ENCODE measurements at regions of chr12 and their contacts with region 1.

Region 1: GRCh38 chr12:124512667-124513296 is 54.6 kb downstream of the NCOR2 start:
- DNase-seq: peak; percentile 88 to 90
- ATAC-seq: peak in 7 of 8 donors; percentile 6 to 54 (median 18)
- H3K4me3 ChIP-seq: peak overlapping the region in 2 of 10 donors; percentile 6 to 9
- H3K27ac ChIP-seq: peak overlapping the region; percentile 36 to 83 (median 74)
- H3K4me1 ChIP-seq: peaks cover 52 to 100% (median 92%) of the 10 kb centered on the region in 9 donors
- H3K27me3 ChIP-seq: no peaks in the 10 kb centered on the region
- CTCF ChIP-seq: no peak

Region 2: GRCh38 chr12:124433147-124433874 is 79.5 kb before region 1 on chr12:
- intact Hi-C with region 1: loop called in 1 of 10 experiments (anchors 5 kb)
- DNase-seq: peak; percentile 80 to 82
- ATAC-seq: peak; percentile 64 to 88 (median 74)
- H3K4me3 ChIP-seq: no peak overlapping the region
- H3K27ac ChIP-seq: peak overlapping the region; percentile 36 to 81 (median 54)
- H3K4me1 ChIP-seq: peaks cover 18 to 67% (median 43%) of the 10 kb centered on the region in 9 donors
- H3K27me3 ChIP-seq: no peaks in the 10 kb centered on the region
- CTCF ChIP-seq: peak in 5 of 9 donors; percentile 12 to 41 (median 29)

Measured in heart right ventricle (tissue), 16 donors.